ENCODE measurements at regions of chr19 and their contacts with region 1.

Region 1: GRCh38 chr19:38335949-38336637 is 463 bp downstream of the CATSPERG start:
- DNase-seq: peak; percentile 98
- H3K4me3 Mint-ChIP-seq: peak overlapping the region; percentile 91
- H3K27ac Mint-ChIP-seq: peak overlapping the region; percentile 96
- H3K4me1 Mint-ChIP-seq: peaks cover 6% of the 10 kb centered on the region
- H3K27me3 Mint-ChIP-seq: no peaks in the 10 kb centered on the region

Region 2: GRCh38 chr19:38245826-38246498 is 90.1 kb before region 1 on chr19:
- CTCF ChIA-PET with region 1: interaction called, 47 read pairs
- POLR2A ChIA-PET with region 1: no interaction called
- intact Hi-C with region 1: loop called (anchors 1 kb)
- DNase-seq: no peak
- H3K4me3 Mint-ChIP-seq: no peak overlapping the region
- H3K27ac Mint-ChIP-seq: no peak overlapping the region
- H3K4me1 Mint-ChIP-seq: peaks cover 2% of the 10 kb centered on the region
- H3K27me3 Mint-ChIP-seq: no peaks in the 10 kb centered on the region

Region 3: GRCh38 chr19:38315657-38316476 is 20.2 kb before region 1 on chr19 and contains the start of gene YIF1B:
- CTCF ChIA-PET with region 1: interaction called, 4 read pairs
- POLR2A ChIA-PET with region 1: interaction called, 3 read pairs
- intact Hi-C with region 1: loop called (anchors 1 kb)
- DNase-seq: peak; percentile 98
- H3K4me3 Mint-ChIP-seq: peak within 1 kb of the TSS; percentile 83
- H3K27ac Mint-ChIP-seq: peak within 1 kb of the TSS; percentile 88
- H3K4me1 Mint-ChIP-seq: peaks cover 38% of the 10 kb centered on the region
- H3K27me3 Mint-ChIP-seq: no peaks in the 10 kb centered on the region
- total RNA-seq, gene YIF1B: 79.7 to 82.3 TPM

Region 4: DNA sequence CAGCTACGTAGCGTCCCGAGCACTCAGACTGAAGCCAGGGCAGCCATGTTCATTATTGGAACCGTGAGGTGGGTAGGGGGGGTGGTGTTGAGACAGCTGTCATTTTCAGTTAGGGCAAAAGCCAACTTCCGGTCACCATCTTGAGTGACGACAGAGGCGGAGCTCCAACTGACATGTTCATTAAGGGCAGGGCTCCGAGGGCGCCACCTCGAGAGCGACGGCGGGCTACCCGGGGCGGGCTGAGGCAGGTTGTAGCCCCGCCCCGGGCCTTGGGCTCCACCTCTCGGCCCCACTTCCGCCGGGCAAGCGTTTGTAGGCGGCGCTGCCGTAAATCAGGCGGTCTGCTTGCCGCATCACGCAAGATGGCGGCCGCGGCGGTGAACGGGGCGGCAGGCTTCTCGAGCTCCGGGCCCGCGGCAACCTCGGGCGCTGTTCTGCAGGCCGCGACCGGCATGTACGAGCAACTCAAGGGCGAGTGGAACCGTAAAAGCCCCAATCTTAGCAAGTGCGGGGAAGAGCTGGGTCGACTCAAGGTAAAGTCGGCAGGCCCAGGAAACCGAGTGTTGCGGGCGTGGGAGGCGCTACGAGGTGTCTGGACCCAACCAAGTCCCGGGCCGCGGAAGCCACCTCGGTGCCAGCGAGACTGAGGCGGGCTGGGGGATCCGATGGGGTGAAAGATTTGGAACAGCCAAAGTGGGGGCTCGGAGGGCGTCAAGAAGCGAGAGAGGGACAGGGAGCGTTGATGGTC is 38.5 kb after region 1 on chr19 and contains the start of gene PSMD8:
- CTCF ChIA-PET with region 1: interaction called, 26 read pairs
- POLR2A ChIA-PET with region 1: interaction called, 11 read pairs
- intact Hi-C with region 1: loop called (anchors 1 kb)
- DNase-seq: peak; percentile 99
- H3K4me3 Mint-ChIP-seq: peak within 1 kb of the TSS; percentile 86
- H3K27ac Mint-ChIP-seq: peak within 1 kb of the TSS; percentile 87
- H3K4me1 Mint-ChIP-seq: peaks cover 22% of the 10 kb centered on the region
- H3K27me3 Mint-ChIP-seq: no peaks in the 10 kb centered on the region
- total RNA-seq, gene PSMD8: 214 to 224 TPM